ENCODE measurements at regions of chr7 and their contacts with region 1.

Region 1: GRCh38 chr7:26291699-26292538 is at the start of gene SNX10:
- DNase-seq: peak; percentile 85
- ATAC-seq: peak; percentile 85
- H3K4me3 Mint-ChIP-seq: peak within 1 kb of the TSS; percentile 93
- H3K27ac Mint-ChIP-seq: peak within 1 kb of the TSS; percentile 95
- H3K4me1 Mint-ChIP-seq: peaks cover 35% of the 10 kb centered on the region
- H3K27me3 Mint-ChIP-seq: peaks cover 2% of the 10 kb centered on the region
- total RNA-seq, gene SNX10: 31.0 to 31.6 TPM

Region 2: GRCh38 chr7:26305463-26306273 is 13.7 kb after region 1 on chr7:
- POLR2A ChIA-PET with region 1: interaction called, 12 read pairs
- DNase-seq: no peak
- ATAC-seq: peak; percentile 68
- H3K4me3 Mint-ChIP-seq: peak overlapping the region; percentile 58
- H3K27ac Mint-ChIP-seq: peak overlapping the region; percentile 83
- H3K4me1 Mint-ChIP-seq: peaks cover 13% of the 10 kb centered on the region
- H3K27me3 Mint-ChIP-seq: no peaks in the 10 kb centered on the region

Measured in activated naive CD8-positive, alpha-beta T cell treated with anti-CD3 and anti-CD28 coated beads, Interleukin-2, amount 10 ng/mL, durations not matched to agents 7 days and 5 days (primary cell).